IMR-90 (cell line): ENCODE measurements at regions of chr15 and their contacts with region 1.

Region 1: DNA sequence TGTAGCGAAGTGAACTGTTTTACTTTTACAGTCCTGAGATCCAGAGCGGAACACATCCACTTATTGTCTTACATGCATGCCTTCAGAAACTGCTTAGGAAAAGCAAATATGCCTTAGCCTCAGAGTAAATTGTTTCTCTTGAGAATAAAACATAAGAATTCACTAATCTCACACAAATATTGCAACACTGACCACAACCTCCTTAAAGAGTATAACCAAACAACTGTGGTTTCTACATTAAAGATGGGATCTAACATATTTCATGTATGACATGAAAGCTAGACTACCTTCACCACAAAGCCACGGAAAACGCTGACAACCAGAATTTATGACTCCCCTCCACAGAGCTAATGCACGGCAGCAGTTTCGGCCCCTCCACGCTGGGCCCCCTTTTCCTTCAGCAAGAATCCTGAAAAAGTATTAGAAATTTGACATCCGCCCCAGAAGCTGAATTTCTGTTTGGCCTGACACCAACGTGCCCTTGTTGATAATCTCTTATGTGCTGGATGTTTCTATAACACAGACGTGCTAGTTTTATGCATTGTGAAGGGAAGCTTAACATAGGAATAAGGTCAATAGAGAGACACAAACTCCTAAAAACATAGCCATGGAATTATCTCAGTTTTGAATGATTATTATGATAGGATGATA is 84.6 kb downstream of the GREM1 start:
- DNase-seq: peak; percentile 97
- ATAC-seq: peak; percentile 86
- H3K4me3 ChIP-seq: no peak overlapping the region
- H3K27ac ChIP-seq: peak overlapping the region; percentile 59; the same call in 1 of the 2 replicates
- H3K4me1 ChIP-seq: peaks cover 10% of the 10 kb centered on the region
- H3K27me3 ChIP-seq: no peaks in the 10 kb centered on the region
- CTCF ChIP-seq: no peak
- POLR2A ChIP-seq: no peak
- RAD21 ChIP-seq: peak; percentile 3; the same call in 1 of the 2 replicates

Region 2: GRCh38 chr15:32688151-32688639 is 114.2 kb before region 1 on chr15:
- CTCF ChIA-PET with region 1: no interaction called
- POLR2A ChIA-PET with region 1: no interaction called
- dilution Hi-C with region 1: no loop called
- in situ Hi-C with region 1: no loop called
- intact Hi-C with region 1: no loop called
- DNase-seq: peak; percentile 41
- ATAC-seq: no peak
- H3K4me3 ChIP-seq: no peak overlapping the region
- H3K27ac ChIP-seq: no peak overlapping the region
- H3K4me1 ChIP-seq: peaks cover 16% of the 10 kb centered on the region
- H3K27me3 ChIP-seq: no peaks in the 10 kb centered on the region; the same call in 1 of the 2 replicates
- CTCF ChIP-seq: no peak
- POLR2A ChIP-seq: no peak
- RAD21 ChIP-seq: no peak

Region 3: DNA sequence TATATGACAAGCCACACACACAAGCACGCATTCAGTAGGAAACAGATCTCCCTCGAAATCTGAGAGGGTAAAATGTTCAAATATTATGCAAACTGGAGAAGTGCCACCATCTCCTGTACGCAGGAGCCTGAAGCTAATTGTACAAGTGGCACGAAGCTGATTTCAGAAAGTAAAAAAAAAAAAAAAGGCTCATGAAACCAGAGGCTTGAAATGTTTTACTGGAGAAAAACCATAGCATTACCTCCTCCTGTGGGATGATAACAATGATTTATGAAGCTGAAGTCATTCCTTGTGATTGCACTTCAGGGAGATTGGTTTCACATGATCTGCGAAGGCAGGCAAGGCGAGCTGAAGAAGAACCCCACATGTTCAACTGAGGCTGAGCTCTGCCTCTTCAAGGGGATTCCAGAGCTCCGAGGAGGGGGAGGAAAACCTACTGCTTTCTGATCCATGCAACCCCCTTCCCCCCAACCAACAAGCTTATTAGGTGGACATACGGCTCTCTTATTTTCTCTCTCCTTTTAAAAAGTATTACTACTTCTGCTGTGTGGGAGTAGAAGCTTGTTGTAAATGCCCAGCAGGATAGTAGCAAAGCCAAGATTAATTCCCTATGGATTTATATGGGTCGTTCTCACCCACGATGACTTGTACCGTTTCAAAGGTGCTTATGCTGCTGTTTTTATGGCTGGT is 16.5 kb after region 1 on chr15:
- CTCF ChIA-PET with region 1: no interaction called
- POLR2A ChIA-PET with region 1: no interaction called
- dilution Hi-C with region 1: no loop called
- in situ Hi-C with region 1: no loop called
- intact Hi-C with region 1: loop called (anchors 2 kb)
- DNase-seq: peak; percentile 86
- ATAC-seq: peak; percentile 69
- H3K4me3 ChIP-seq: no peak overlapping the region
- H3K27ac ChIP-seq: peak overlapping the region; percentile 38; the same call in 1 of the 2 replicates
- H3K4me1 ChIP-seq: peaks cover 4% of the 10 kb centered on the region; the same call in 1 of the 2 replicates
- H3K27me3 ChIP-seq: no peaks in the 10 kb centered on the region
- CTCF ChIP-seq: no peak
- POLR2A ChIP-seq: no peak
- RAD21 ChIP-seq: no peak

Region 4: GRCh38 chr15:32844118-32844711 is 41.8 kb after region 1 on chr15:
- CTCF ChIA-PET with region 1: no interaction called
- POLR2A ChIA-PET with region 1: no interaction called
- dilution Hi-C with region 1: no loop called
- in situ Hi-C with region 1: no loop called
- intact Hi-C with region 1: no loop called
- DNase-seq: peak; percentile 70
- ATAC-seq: 0 out of 2 replicates have a peak, but pooled peaks have one; percentile 27
- H3K4me3 ChIP-seq: no peak overlapping the region
- H3K27ac ChIP-seq: 0 out of 2 replicates have a peak overlapping the region, but pooled peaks have one; percentile 23
- H3K4me1 ChIP-seq: peaks cover 9% of the 10 kb centered on the region
- H3K27me3 ChIP-seq: no peaks in the 10 kb centered on the region
- CTCF ChIP-seq: peak; percentile 63
- POLR2A ChIP-seq: no peak
- RAD21 ChIP-seq: peak; percentile 64

Region 5: GRCh38 chr15:32870240-32871033 is 68.0 kb after region 1 on chr15:
- CTCF ChIA-PET with region 1: no interaction called
- POLR2A ChIA-PET with region 1: no interaction called
- dilution Hi-C with region 1: no loop called
- in situ Hi-C with region 1: no loop called
- intact Hi-C with region 1: no loop called
- DNase-seq: peak; percentile 100
- ATAC-seq: peak; percentile 55
- H3K4me3 ChIP-seq: no peak overlapping the region
- H3K27ac ChIP-seq: peak overlapping the region; percentile 100
- H3K4me1 ChIP-seq: peaks cover 38% of the 10 kb centered on the region
- H3K27me3 ChIP-seq: no peaks in the 10 kb centered on the region
- CTCF ChIP-seq: no peak
- POLR2A ChIP-seq: no peak; the same call in 1 of the 2 replicates
- RAD21 ChIP-seq: peak; percentile 47